ENCODE measurements at regions of chr3 and their contacts with region 1.

Region 1: DNA sequence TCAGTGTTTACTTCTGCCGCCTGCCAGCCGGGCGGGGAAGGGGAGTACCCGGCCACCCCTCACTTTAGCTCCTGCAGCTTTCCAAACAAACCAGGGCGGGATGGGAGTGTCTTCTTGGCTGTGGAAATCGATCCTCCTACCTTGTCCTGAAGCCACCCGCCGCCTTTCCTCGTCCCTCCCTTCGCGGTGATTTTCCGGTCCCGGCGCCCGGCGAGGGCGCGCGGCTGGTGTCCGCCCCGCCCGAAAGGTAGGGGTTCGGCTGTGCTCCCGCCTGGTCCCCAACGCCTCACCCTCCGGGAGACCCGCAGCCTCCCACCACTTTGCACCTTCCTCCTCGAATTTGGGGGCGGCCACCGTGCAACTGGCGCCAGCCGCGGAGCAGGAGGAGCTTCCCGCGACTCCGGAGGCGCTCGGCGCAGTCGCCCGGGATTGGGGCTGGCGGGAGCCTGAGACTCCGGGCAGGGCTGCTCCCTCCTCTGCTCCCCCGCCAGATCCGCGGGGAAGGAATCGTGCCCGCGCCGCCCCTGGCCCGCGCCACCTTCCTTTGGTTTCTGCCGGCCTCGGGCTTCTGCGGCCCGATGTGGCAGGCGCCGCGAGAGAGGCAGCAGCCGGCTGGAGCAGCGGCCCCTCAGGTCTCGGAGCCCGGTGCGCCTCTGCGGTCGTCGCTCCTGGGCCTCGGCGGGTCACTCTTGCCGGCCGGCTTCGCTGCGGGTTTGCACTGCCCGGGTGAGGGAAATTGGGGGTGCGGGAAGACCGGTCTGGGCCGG is 30.7 kb upstream of the ST3GAL6 start:
- DNase-seq: no peak
- ATAC-seq: peak; percentile 83
- H3K4me3 ChIP-seq: peak overlapping the region; percentile 62
- H3K27ac ChIP-seq: no peak overlapping the region
- H3K4me1 ChIP-seq: peaks cover 2% of the 10 kb centered on the region
- H3K27me3 ChIP-seq: peaks cover 6% of the 10 kb centered on the region; the same call in 1 of the 2 replicates
- CTCF ChIP-seq: no peak
- POLR2A ChIP-seq: no peak
- RAD21 ChIP-seq: no peak

Region 2: DNA sequence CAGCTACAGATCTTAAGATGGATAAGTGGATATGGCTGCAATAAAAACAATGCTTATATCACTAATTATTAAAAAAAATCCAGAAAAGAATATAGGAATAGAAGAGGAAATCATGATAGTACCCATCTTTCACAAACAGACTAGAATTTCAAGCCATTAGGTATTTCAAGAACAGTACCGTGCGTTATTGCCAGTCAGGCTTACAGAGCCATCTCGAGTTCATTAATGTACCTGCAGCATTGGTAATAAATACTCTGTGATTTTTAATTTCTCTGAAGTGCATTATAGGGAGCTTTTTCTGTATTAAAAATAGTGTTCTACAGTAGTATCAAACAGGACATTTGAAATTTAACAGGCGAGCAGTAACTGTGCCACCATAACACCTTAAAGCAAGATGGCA is 66.4 kb after region 1 on chr3:
- CTCF ChIA-PET with region 1: no interaction called
- POLR2A ChIA-PET with region 1: no interaction called
- dilution Hi-C with region 1: no loop called
- in situ Hi-C with region 1: no loop called
- intact Hi-C with region 1: loop called (anchors 5 kb)
- DNase-seq: no peak
- ATAC-seq: no peak
- H3K4me3 ChIP-seq: no peak overlapping the region
- H3K27ac ChIP-seq: no peak overlapping the region
- H3K4me1 ChIP-seq: peaks cover 4% of the 10 kb centered on the region; the same call in 1 of the 2 replicates
- H3K27me3 ChIP-seq: no peaks in the 10 kb centered on the region
- CTCF ChIP-seq: no peak
- POLR2A ChIP-seq: no peak
- RAD21 ChIP-seq: no peak

Region 3: DNA sequence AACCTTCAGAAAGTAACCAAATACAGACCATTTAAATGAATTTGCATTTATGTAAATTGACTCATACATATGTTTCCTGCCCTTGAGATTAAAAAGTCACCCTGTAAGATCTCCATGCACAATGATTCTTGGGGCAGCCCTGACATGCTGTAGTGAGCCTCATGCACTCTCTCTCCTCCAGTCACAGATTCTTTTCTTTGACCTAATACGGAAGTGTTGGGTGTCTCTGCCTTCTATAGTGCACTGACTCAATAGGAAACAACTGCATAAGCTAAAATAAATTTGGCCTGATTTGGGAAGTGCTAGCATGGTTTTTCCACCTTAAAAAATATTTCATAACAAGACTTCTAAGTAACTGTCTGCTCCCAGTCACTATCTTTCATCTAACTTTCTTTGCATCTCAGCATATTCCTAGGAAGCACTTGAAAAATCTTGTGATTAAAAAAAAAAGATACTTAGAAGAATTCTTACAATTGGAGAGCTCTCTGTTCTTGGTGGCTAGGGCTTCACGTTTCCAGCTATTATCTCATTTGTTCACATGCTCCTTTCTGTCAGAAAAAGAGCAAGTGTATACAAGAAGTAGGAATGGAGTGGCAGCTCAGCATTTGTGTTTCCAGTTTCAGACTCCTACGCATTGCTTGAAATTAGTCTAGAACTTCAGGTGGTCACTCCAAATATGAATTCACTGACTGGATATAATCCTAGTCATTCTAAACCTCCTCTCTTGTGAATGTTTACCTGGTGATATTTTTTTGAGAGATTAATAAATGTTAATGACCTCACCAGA is 698.1 kb after region 1 on chr3:
- CTCF ChIA-PET with region 1: no interaction called
- POLR2A ChIA-PET with region 1: no interaction called
- dilution Hi-C with region 1: no loop called
- in situ Hi-C with region 1: no loop called
- intact Hi-C with region 1: no loop called
- DNase-seq: peak; percentile 36
- ATAC-seq: peak; percentile 81
- H3K4me3 ChIP-seq: no peak overlapping the region
- H3K27ac ChIP-seq: no peak overlapping the region
- H3K4me1 ChIP-seq: no peaks in the 10 kb centered on the region
- H3K27me3 ChIP-seq: no peaks in the 10 kb centered on the region
- CTCF ChIP-seq: no peak
- POLR2A ChIP-seq: no peak
- RAD21 ChIP-seq: no peak

Measured in IMR-90 (cell line).